ENCODE measurements at regions of chr5 and their contacts with region 1.

Region 1: DNA sequence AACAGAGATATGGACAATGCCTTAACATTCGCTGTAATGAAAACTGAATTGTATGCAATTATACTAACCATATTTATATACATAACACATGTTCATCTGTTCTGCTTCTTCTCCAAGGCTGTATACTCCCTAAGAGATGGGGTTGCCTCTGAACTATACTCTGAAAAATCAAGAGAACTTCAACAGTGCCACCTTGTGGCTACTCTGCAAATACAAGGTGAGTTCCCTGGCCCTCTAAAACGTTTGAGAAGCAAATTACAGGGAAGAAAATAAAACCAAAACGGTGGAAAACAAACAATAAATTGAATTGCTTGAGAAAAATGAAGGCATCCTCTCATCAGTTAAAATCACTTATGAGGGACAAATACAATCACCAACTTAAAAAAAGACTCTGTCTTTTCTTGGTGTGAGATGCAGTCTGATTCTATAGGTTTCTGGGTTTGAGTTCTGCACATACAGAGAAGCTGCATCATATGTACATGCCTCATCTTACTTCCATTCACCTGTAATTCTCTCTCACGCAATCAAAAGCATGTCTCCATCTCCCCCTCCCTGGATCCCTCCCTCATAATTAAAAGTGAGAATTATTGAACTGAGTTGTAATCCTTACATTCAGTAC is 98.6 kb downstream of the FBXW11 start:
- DNase-seq: peak; percentile 69
- ATAC-seq: peak; percentile 63
- H3K4me3 ChIP-seq: no peak overlapping the region
- H3K4me3 Mint-ChIP-seq: no peak overlapping the region
- H3K27ac ChIP-seq: no peak overlapping the region
- H3K27ac Mint-ChIP-seq: no peak overlapping the region
- H3K4me1 ChIP-seq: peaks cover 9 to 16% of the 10 kb centered on the region in 2 donors
- H3K4me1 Mint-ChIP-seq: peaks cover 50% of the 10 kb centered on the region
- H3K27me3 ChIP-seq: no peaks in the 10 kb centered on the region
- H3K27me3 Mint-ChIP-seq: no peaks in the 10 kb centered on the region
- CTCF ChIP-seq: peak; percentile 86

Region 2: GRCh38 chr5:171207256-171207847 is 700.5 kb before region 1 on chr5:
- CTCF ChIA-PET with region 1: interaction called, 4 read pairs
- POLR2A ChIA-PET with region 1: no interaction called
- intact Hi-C with region 1: loop called (anchors 5 kb)
- DNase-seq: peak; percentile 25
- ATAC-seq: no peak
- H3K4me3 ChIP-seq: no peak overlapping the region
- H3K4me3 Mint-ChIP-seq: no peak overlapping the region
- H3K27ac ChIP-seq: no peak overlapping the region
- H3K27ac Mint-ChIP-seq: no peak overlapping the region
- H3K4me1 ChIP-seq: no peaks in the 10 kb centered on the region
- H3K4me1 Mint-ChIP-seq: no peaks in the 10 kb centered on the region
- H3K27me3 ChIP-seq: no peaks in the 10 kb centered on the region
- H3K27me3 Mint-ChIP-seq: peaks cover 16% of the 10 kb centered on the region
- CTCF ChIP-seq: peak; percentile 45

Region 3: GRCh38 chr5:171418316-171418981 is 489.4 kb before region 1 on chr5:
- CTCF ChIA-PET with region 1: interaction called, 15 read pairs
- POLR2A ChIA-PET with region 1: no interaction called
- intact Hi-C with region 1: loop called (anchors 1 kb)
- DNase-seq: peak; percentile 65
- ATAC-seq: peak; percentile 71
- H3K4me3 ChIP-seq: peak overlapping the region in 4 of 5 experiments; percentile 29 to 54 (median 43)
- H3K4me3 Mint-ChIP-seq: peak overlapping the region; percentile 85
- H3K27ac ChIP-seq: no peak overlapping the region
- H3K27ac Mint-ChIP-seq: no peak overlapping the region
- H3K4me1 ChIP-seq: peaks cover 20 to 22% of the 10 kb centered on the region in 2 donors
- H3K4me1 Mint-ChIP-seq: peaks cover 12% of the 10 kb centered on the region
- H3K27me3 ChIP-seq: peaks cover 0 to 25% (median 8%) of the 10 kb centered on the region in 4 experiments
- H3K27me3 Mint-ChIP-seq: peaks cover 20% of the 10 kb centered on the region
- CTCF ChIP-seq: peak; percentile 70

Region 4: DNA sequence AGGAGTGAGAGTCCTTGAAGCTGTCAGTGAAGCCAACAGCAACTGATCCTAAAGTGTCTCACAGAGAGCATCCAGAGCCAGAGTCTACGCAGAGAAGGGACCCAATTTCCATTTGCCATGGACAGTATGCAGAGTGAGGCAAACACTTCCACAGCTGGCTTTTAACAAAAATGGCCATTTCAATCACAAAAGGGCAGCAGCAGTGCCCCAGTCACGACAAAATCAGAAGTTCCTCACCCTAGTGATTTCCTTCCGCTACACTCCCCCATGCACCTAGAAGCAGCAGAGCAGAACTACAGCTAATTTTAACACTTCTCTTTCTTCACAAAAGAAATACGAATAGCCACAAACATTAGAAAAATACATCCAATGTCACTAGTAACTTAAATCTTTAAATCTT is 70.7 kb after region 1 on chr5:
- CTCF ChIA-PET with region 1: no interaction called
- POLR2A ChIA-PET with region 1: no interaction called
- intact Hi-C with region 1: no loop called
- DNase-seq: peak; percentile 66
- ATAC-seq: peak; percentile 76
- H3K4me3 ChIP-seq: peak overlapping the region; percentile 16 to 60 (median 30)
- H3K4me3 Mint-ChIP-seq: peak overlapping the region; percentile 56
- H3K27ac ChIP-seq: peak overlapping the region; percentile 69 to 83
- H3K27ac Mint-ChIP-seq: peak overlapping the region; percentile 88
- H3K4me1 ChIP-seq: peaks cover 73 to 76% of the 10 kb centered on the region in 2 donors
- H3K4me1 Mint-ChIP-seq: peaks cover 74% of the 10 kb centered on the region
- H3K27me3 ChIP-seq: no peaks in the 10 kb centered on the region
- H3K27me3 Mint-ChIP-seq: no peaks in the 10 kb centered on the region
- CTCF ChIP-seq: no peak

Region 5: DNA sequence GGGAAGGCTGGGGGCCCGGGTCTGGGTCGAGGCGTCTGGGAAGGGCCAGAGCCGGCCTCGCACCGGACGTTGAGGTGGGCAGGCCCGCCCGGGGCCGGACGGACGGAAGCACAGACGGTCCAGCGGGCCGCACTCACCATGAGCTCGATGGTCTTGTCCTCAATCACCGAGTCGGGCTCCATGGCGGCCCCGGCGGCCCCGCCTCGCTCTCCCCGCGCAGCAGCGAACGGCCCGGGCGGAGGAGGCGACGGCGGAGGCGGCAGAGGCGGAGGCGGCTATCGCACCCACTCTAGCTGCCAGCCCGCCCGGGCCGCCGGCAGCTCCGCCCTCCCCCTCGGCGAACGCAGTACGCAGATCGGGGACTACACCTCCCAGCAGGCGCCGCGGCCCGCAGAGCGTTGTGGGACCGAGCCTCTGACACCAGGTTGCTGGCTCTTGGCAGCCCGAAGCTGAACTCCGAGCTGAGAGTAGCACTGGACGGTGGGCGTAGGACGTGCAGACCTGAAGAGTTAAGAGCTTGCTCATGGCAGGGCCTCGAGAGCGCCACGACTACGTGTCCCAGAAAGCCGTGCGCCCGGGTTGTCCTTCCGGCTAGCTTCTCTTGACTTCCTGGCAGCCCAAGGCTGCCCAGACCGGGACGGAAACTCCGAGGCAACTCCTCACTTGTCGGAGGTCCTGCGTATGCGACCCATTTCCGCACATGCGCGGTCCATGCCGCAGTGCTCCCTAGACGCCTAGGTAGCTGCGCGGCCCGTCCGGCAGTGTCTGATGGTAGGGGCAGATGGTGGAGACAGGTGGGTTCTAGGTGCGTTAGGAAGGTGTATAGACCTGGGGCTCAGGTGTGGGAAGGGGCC is 98.7 kb after region 1 on chr5 and contains the start of gene FBXW11:
- CTCF ChIA-PET with region 1: interaction called, 130 read pairs
- POLR2A ChIA-PET with region 1: interaction called, 3 read pairs
- intact Hi-C with region 1: no loop called
- DNase-seq: peak; percentile 97
- ATAC-seq: peak; percentile 85
- H3K4me3 ChIP-seq: peak within 1 kb of the TSS; percentile 77 to 94 (median 90)
- H3K4me3 Mint-ChIP-seq: peak within 1 kb of the TSS; percentile 92
- H3K27ac ChIP-seq: peak within 1 kb of the TSS; percentile 96 to 97
- H3K27ac Mint-ChIP-seq: peak within 1 kb of the TSS; percentile 93
- H3K4me1 ChIP-seq: peaks cover 44 to 47% of the 10 kb centered on the region in 2 donors
- H3K4me1 Mint-ChIP-seq: peaks cover 49% of the 10 kb centered on the region
- H3K27me3 ChIP-seq: no peaks in the 10 kb centered on the region
- H3K27me3 Mint-ChIP-seq: no peaks in the 10 kb centered on the region
- CTCF ChIP-seq: no peak
- total RNA-seq, gene FBXW11: 62.4 and 64.8 TPM in 2 replicates

Region 6: DNA sequence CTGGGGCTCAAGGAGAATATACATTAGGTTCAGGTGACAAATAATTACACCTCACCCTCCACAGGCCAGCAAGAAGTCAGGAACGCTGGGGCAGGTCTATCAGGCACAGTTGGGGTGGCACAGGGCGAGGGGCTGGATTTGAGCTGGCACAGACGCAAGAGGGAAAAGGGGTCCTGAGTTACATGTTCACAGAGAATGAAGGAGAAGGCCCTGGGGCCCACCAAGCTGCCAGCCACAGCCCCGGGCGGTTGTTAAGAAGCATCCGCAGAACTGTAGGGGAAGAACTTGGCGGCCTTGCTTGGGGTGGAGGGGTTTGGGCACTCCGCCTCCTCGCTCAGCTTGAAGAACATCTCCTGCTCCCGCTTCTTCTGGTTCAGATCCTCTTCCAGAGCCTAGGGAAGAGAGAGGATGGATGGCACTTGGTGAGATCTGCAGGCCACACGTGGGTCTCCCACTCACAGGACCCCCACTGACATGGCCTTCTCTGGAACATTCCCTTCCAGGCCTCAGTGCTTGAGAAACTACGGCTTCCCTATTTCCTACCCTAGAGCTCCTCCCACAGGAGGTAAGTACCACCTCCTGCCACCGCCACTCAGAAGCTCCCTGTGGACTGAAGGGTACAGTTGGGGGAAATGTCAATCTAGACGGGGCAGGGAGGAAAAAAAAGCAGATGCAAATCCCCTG is 136.9 kb after region 1 on chr5:
- CTCF ChIA-PET with region 1: interaction called, 227 read pairs
- POLR2A ChIA-PET with region 1: no interaction called
- intact Hi-C with region 1: loop called (anchors 1 kb)
- DNase-seq: no peak
- ATAC-seq: no peak
- H3K4me3 ChIP-seq: no peak overlapping the region
- H3K4me3 Mint-ChIP-seq: no peak overlapping the region
- H3K27ac ChIP-seq: peak overlapping the region in 1 of 2 donors; percentile 64
- H3K27ac Mint-ChIP-seq: peak overlapping the region; percentile 59
- H3K4me1 ChIP-seq: peaks cover 0 to 7% of the 10 kb centered on the region in 2 donors
- H3K4me1 Mint-ChIP-seq: peaks cover 6% of the 10 kb centered on the region
- H3K27me3 ChIP-seq: no peaks in the 10 kb centered on the region
- H3K27me3 Mint-ChIP-seq: no peaks in the 10 kb centered on the region
- CTCF ChIP-seq: no peak

Region 7: DNA sequence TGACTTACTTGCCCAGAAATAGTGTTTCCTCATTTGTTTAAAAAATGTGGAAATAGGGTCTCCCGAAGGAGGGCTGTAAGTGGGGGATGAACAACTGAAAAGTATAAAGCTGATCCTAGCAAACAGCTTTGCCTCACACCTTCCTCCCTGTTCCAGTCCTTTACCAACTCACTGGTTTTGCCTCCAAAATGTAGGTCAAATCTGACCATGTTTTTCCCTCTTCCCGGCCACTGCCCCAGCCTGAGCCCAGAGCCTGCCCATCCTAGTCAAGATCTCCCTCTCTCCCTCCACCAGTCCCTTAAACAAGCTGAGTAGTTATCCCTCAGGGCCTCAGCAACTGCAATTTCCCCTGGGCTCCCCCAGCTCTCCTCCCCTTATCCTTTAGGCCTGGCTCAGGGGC is 181.0 kb after region 1 on chr5:
- CTCF ChIA-PET with region 1: no interaction called
- POLR2A ChIA-PET with region 1: no interaction called
- intact Hi-C with region 1: no loop called
- DNase-seq: no peak
- ATAC-seq: no peak
- H3K4me3 ChIP-seq: no peak overlapping the region
- H3K4me3 Mint-ChIP-seq: no peak overlapping the region
- H3K27ac ChIP-seq: no peak overlapping the region
- H3K27ac Mint-ChIP-seq: no peak overlapping the region
- H3K4me1 ChIP-seq: no peaks in the 10 kb centered on the region
- H3K4me1 Mint-ChIP-seq: no peaks in the 10 kb centered on the region
- H3K27me3 ChIP-seq: no peaks in the 10 kb centered on the region
- H3K27me3 Mint-ChIP-seq: no peaks in the 10 kb centered on the region
- CTCF ChIP-seq: no peak

Region 8: GRCh38 chr5:172293054-172293744 is 385.4 kb after region 1 on chr5:
- CTCF ChIA-PET with region 1: interaction called, 26 read pairs
- POLR2A ChIA-PET with region 1: no interaction called
- intact Hi-C with region 1: loop called (anchors 1 kb)
- DNase-seq: peak; percentile 71
- ATAC-seq: peak; percentile 99
- H3K4me3 ChIP-seq: no peak overlapping the region
- H3K4me3 Mint-ChIP-seq: no peak overlapping the region
- H3K27ac ChIP-seq: no peak overlapping the region
- H3K27ac Mint-ChIP-seq: no peak overlapping the region
- H3K4me1 ChIP-seq: no peaks in the 10 kb centered on the region
- H3K4me1 Mint-ChIP-seq: peaks cover 3% of the 10 kb centered on the region
- H3K27me3 ChIP-seq: no peaks in the 10 kb centered on the region
- H3K27me3 Mint-ChIP-seq: peaks cover 8% of the 10 kb centered on the region
- CTCF ChIP-seq: peak; percentile 85

Measured in B cell (primary cell).